CD8-positive, alpha-beta memory T cell (primary cell): ENCODE measurements at regions of chrX and their contacts with region 1.

Region 1: DNA sequence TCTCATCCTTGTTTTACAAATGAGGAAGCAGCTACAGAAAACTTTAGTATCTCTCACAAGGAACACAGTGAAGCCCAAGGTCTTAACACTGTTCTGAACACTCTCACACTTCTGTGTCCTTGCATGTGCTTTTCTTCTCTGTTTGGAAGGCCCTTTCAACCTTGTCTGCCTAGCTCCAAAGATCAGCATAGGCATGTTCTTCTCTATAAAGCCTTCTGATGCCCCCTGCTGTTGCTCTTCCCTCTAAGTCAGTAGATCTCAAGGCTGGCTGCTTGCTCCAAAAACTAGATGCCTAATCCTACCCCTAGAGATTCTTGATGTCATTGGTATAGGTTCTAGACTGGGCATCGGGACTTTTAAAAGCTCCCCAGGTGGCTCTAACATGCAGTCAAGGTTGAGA is 5.9 kb downstream of the APOO start:
- DNase-seq: peak in 4 of 5 donors; percentile 1 to 54 (median 29)
- H3K4me3 ChIP-seq: no peak overlapping the region
- H3K4me3 Mint-ChIP-seq: no peak overlapping the region
- H3K27ac ChIP-seq: no peak overlapping the region
- H3K27ac Mint-ChIP-seq: no peak overlapping the region
- H3K4me1 ChIP-seq: no peaks in the 10 kb centered on the region
- H3K4me1 Mint-ChIP-seq: peaks cover 0 to 4% (median 0%) of the 10 kb centered on the region in 3 donors
- H3K27me3 ChIP-seq: no peaks in the 10 kb centered on the region
- H3K27me3 Mint-ChIP-seq: peaks cover 0 to 3% of the 10 kb centered on the region in 2 donors

Region 2: DNA sequence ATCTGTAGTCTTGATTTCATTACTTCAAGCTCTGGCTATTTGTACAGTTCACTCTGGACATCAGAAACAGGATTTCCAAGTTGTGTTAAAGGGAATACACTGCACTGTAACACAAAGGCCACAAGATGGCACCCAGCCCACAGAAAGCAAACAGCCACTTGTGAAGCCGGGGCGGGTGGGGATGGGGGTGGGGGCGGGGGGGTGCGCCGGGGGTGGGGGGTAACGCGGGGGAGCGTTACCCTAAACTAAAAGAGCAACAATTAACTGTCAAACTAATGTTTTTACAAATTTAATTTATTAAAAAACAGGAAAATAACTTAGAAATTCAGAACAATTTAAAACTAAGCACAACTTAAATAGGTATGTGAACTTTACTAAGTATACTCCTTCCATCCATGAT is 207.2 kb before region 1 on chrX:
- CTCF ChIA-PET with region 1: interaction called, 41 read pairs
- POLR2A ChIA-PET with region 1: interaction called, 3 read pairs
- DNase-seq: peak; percentile 11 to 65 (median 27)
- H3K4me3 ChIP-seq: no peak overlapping the region
- H3K4me3 Mint-ChIP-seq: no peak overlapping the region
- H3K27ac ChIP-seq: no peak overlapping the region
- H3K27ac Mint-ChIP-seq: no peak overlapping the region
- H3K4me1 ChIP-seq: no peaks in the 10 kb centered on the region
- H3K4me1 Mint-ChIP-seq: peaks cover 0 to 1% (median 0%) of the 10 kb centered on the region in 3 donors
- H3K27me3 ChIP-seq: no peaks in the 10 kb centered on the region
- H3K27me3 Mint-ChIP-seq: peaks cover 0 to 3% of the 10 kb centered on the region in 2 donors

Region 3: DNA sequence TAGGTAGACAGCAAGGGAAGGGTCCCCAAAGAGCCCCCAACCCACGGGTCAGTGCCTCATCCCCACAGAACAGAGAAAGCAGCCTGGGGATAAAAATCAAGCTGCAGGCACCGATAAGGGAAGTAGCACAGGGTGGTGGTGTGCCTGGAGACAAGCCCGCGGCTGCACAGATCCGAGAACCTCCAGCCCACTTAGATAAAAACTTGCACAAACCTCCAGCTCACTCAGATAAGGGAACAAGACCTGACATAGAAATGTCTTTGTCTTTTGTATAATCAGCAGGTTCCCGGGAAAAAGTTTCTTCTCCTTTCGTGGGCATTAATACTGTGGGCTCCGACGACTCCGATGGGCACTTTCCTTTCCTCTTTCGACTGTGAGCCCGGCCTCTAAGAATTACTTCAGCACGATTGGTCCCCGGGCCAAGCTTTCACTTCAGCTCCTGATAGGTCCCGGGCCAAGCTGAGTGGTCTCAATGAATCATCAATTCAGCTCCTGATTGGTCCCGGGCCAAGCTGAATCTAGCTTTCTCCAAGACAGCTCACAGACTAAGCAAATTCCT is 202.1 kb before region 1 on chrX:
- CTCF ChIA-PET with region 1: interaction called, 41 read pairs
- POLR2A ChIA-PET with region 1: no interaction called
- DNase-seq: peak in 1 of 5 donors; percentile 20
- H3K4me3 ChIP-seq: no peak overlapping the region
- H3K4me3 Mint-ChIP-seq: peak overlapping the region in 6 of 7 donors; percentile 4 to 82 (median 59)
- H3K27ac ChIP-seq: no peak overlapping the region
- H3K27ac Mint-ChIP-seq: peak overlapping the region in 4 of 8 donors; percentile 19 to 76 (median 63)
- H3K4me1 ChIP-seq: no peaks in the 10 kb centered on the region
- H3K4me1 Mint-ChIP-seq: no peaks in the 10 kb centered on the region
- H3K27me3 ChIP-seq: no peaks in the 10 kb centered on the region
- H3K27me3 Mint-ChIP-seq: no peaks in the 10 kb centered on the region

Region 4: DNA sequence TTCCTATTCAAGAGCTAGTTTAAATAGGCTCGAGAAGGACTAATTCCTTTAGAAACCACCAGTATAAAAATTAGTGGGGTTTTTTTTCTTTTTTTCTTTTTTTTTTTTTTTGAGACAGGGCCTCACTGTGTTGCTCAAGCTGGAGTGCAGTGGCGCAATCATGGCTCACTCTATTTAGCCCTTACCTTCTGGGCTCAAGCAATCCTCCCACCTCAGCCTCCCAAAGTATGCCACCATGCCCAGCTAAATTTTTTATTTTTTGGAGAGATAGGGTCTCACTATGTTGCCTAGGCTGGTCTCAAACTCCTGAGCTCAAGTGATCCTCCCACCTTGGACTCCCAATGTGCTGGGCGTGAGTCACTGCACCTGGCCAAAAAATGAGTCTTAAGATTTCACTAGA is 46.9 kb before region 1 on chrX:
- CTCF ChIA-PET with region 1: no interaction called
- POLR2A ChIA-PET with region 1: no interaction called
- DNase-seq: no peak
- H3K4me3 ChIP-seq: no peak overlapping the region
- H3K4me3 Mint-ChIP-seq: no peak overlapping the region
- H3K27ac ChIP-seq: no peak overlapping the region
- H3K27ac Mint-ChIP-seq: no peak overlapping the region
- H3K4me1 ChIP-seq: no peaks in the 10 kb centered on the region
- H3K4me1 Mint-ChIP-seq: no peaks in the 10 kb centered on the region
- H3K27me3 ChIP-seq: no peaks in the 10 kb centered on the region
- H3K27me3 Mint-ChIP-seq: no peaks in the 10 kb centered on the region